ENCODE measurements at regions of chr19 and their contacts with region 1.

Region 1: GRCh38 chr19:18058208-18059030 is 28.3 kb downstream of the IL12RB1 start:
- DNase-seq: peak; percentile 69 to 88
- H3K4me3 ChIP-seq: peak overlapping the region in 1 of 2 donors; percentile 18
- H3K27ac ChIP-seq: peak overlapping the region; percentile 78 to 79
- H3K4me1 ChIP-seq: peaks cover 0 to 25% (median 11%) of the 10 kb centered on the region in 4 donors
- H3K27me3 ChIP-seq: peaks cover 0 to 4% of the 10 kb centered on the region in 2 donors
- CTCF ChIP-seq: peak; percentile 93 to 98

Region 2: DNA sequence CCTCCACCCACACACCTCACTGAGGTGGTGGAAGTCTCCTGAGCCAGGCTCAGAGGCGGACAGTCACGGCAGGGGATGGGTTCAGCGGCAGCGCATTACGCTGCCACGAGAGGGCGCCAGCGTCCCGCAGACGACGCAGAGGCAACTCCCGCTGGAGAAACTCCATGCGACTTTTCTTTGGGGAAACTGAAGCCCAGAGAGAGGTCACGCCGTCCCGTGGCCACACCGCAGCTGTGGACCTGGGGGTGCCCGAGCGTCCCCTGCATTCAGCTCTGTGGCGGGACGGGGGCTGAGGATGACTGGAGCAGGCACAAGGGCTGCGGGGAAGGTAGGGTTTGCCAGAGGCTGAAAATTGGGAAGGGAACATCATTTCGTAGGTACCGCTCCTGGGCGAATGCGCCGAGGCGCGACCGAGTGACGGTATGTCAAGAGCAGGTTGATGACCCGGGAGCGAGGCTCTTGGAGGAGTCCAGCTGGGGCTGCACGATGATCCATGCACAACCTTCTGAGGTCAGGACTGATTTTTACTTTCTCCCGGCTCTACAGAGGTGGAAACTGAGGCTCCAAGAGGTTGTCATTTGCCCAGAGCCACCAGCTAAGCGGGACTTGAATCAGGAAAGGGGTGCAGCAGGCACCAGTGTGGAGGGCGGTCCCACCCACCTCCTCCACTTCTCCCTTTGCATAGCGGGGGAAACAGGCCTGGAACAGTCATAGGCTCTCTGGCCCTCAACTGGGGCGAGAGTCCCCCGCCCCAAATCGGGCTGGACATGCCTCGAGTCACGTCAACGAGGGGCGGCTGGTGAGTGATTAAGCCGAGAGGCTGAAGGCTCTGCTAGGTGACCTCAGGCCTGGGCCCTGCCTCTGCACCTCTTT is 51.1 kb before region 1 on chr19:
- intact Hi-C with region 1: loop called (anchors 1 kb)
- DNase-seq: peak; percentile 80 to 91
- H3K4me3 ChIP-seq: peak overlapping the region; percentile 64 to 70
- H3K27ac ChIP-seq: peak overlapping the region; percentile 84 to 88
- H3K4me1 ChIP-seq: peaks cover 0 to 53% (median 29%) of the 10 kb centered on the region in 4 donors
- H3K27me3 ChIP-seq: no peaks in the 10 kb centered on the region
- CTCF ChIP-seq: peak; percentile 99

Measured in tibial artery (tissue), 4 donors.